ENCODE measurements at regions of chr5 and their contacts with region 1.

Region 1: DNA sequence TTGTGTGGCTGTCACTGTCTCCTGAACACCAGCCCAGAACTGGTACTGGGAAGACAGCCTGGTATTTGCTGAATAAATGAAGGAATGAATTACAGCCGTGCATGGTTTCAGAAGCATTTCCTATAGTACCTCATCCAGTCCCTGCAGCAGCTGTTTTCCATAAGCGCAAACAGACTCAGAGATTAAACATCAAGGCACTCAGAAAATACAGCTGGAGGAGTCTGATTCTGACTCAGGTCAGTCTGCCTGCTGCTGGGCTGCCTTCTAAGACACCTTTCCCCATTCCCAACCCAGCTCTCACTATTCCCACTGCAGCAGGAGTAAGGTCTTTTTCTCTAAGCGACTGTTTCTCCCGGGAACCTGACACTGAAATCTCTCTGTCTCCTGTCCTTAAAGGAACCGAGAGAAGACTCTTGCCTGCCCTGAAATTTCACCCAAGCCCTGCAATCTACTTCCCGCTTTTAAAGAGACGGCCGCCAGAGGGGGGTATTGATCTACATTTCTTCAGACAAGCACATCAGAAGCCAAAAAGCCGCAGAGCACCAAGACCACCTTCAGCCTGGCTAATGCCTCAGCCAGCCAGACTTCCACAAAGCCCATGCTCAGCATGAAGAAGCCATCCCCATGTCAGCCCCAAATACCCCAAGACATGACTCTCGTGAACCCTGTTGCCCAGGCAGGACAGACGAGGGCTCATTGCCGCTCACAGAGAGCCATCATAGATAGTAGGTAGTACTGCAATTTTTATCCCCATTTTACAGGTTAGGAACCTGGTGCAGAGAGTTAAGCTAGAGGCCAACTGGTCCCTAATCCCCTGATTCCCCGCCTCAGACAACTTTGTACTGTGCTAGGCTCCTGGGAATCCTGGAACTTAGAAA is 5.4 kb upstream of the FOXI1 start:
- DNase-seq: peak; percentile 87 to 94 (median 91)
- H3K4me3 ChIP-seq: no peak overlapping the region
- H3K27ac ChIP-seq: no peak overlapping the region
- H3K4me1 ChIP-seq: peaks cover 6 to 30% (median 17%) of the 10 kb centered on the region in 4 experiments
- H3K27me3 ChIP-seq: no peaks in the 10 kb centered on the region

Region 2: DNA sequence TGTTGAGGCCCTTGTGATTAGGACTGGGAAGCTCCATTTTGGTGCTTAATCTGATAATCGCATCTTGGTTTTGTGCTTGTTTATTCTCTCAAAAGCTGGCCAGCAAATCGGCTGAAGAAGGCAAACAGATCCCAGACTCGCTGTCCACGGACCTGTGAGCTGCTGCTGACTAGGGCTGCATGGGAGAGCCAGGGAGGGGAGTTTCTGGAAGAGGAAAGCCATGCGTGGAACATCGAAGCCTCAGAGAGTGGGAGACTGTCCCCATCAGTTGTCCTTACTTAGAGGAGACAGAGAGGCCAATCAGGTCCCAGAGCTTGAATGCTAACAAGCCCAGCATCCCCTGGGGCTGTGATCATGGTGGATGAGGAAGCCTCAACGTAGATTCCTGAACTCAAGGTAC is 17.6 kb before region 1 on chr5:
- CTCF ChIA-PET with region 1: interaction called, 12 read pairs
- POLR2A ChIA-PET with region 1: no interaction called
- DNase-seq: no peak
- H3K4me3 ChIP-seq: no peak overlapping the region
- H3K27ac ChIP-seq: no peak overlapping the region
- H3K4me1 ChIP-seq: no peaks in the 10 kb centered on the region
- H3K27me3 ChIP-seq: no peaks in the 10 kb centered on the region

Region 3: DNA sequence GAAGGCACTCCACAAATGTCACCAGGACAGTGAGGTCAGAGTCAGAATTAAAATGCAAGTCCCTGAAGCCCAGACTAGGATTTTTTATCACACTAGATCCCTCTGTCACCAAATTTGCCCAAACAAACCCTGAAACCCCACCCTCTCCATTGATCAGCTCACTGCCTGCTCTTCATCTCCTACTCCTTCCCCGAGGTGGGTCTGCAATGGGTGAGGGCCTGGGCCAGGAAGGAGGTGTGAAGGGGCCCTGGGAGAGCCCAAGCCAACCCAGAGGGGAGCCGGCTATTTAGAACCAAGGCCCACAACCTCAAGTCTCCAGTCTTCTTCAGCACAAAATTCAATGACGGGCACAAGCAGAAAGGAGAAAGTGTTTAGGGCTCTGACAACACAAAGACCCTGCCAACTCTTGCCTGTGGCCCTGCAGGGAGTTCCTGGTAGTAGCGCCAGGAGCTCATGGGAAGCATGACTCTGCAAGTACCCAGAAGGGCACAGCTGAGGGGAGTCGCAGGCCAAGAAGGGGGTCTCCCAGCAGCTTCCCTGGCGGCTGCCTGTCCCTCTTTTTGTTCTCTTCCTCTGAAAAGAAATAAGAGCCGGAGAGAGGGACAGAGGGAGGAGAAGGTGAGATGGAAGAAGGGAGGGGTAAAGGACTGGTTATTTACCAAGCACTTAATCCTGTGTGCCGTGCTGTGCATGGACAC is 10.9 kb after region 1 on chr5:
- CTCF ChIA-PET with region 1: interaction called, 24 read pairs
- POLR2A ChIA-PET with region 1: no interaction called
- DNase-seq: peak in 2 of 3 donors; percentile 49 to 55
- H3K4me3 ChIP-seq: no peak overlapping the region
- H3K27ac ChIP-seq: no peak overlapping the region
- H3K4me1 ChIP-seq: peaks cover 1 to 22% (median 12%) of the 10 kb centered on the region in 4 experiments
- H3K27me3 ChIP-seq: no peaks in the 10 kb centered on the region

Region 4: DNA sequence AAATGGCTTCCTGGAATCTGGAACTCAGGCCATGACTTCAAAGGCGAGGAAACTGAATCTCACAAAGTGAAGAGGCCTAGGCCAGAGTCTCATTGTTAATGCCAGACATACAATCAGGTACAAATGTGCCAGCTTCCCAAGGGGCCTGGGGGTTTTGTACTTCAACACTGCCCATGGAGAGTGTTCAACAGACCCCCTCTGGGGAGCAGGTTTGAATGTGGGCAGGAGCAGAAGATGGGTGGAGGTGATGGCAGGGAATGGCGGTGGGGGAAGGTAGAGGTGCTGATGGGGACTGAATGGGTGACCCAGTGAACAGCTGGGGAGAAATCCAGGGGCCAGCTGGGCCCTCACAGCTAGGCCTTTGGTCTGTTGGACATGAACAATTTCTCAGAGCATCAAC is 17.4 kb after region 1 on chr5:
- CTCF ChIA-PET with region 1: interaction called, 24 read pairs
- POLR2A ChIA-PET with region 1: no interaction called
- DNase-seq: no peak
- H3K4me3 ChIP-seq: no peak overlapping the region
- H3K27ac ChIP-seq: no peak overlapping the region
- H3K4me1 ChIP-seq: peaks cover 1 to 8% (median 4%) of the 10 kb centered on the region in 4 experiments
- H3K27me3 ChIP-seq: no peaks in the 10 kb centered on the region

Region 5: GRCh38 chr5:170183816-170184687 is 83.7 kb after region 1 on chr5:
- CTCF ChIA-PET with region 1: interaction called, 39 read pairs
- POLR2A ChIA-PET with region 1: interaction called, 3 read pairs
- DNase-seq: peak; percentile 27 to 55 (median 46)
- H3K4me3 ChIP-seq: no peak overlapping the region
- H3K27ac ChIP-seq: no peak overlapping the region
- H3K4me1 ChIP-seq: no peaks in the 10 kb centered on the region
- H3K27me3 ChIP-seq: no peaks in the 10 kb centered on the region

Region 6: DNA sequence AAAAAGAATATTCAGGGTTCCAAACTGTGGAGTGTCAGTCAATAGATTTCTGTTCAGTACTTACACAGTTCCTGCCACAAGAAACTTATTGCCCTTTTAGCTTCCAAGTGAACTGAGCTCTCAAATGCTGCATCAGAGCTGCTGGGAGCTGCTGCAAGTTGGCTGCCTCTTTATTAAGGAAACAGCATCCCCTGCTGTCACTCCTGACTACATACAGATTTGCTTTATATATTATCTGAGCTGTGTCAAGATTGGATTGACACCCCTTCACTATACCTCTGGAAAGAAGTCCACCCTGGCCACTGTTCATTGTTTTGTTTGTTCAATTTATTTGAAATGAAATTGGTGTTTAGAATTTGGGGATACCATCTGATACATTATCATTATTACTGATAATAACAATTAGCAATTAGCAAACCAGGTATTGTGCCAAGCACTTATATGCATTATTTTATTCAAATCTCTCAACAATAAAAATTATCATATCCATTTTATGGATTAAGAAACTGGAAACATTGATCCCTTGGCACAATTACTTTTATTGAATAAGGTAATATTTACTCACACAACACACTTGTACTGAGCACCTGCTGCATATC is 116.1 kb after region 1 on chr5:
- CTCF ChIA-PET with region 1: interaction called, 74 read pairs
- POLR2A ChIA-PET with region 1: no interaction called
- DNase-seq: peak; percentile 68 to 86 (median 83)
- H3K4me3 ChIP-seq: no peak overlapping the region
- H3K27ac ChIP-seq: no peak overlapping the region
- H3K4me1 ChIP-seq: peaks cover 0 to 9% (median 4%) of the 10 kb centered on the region in 4 experiments
- H3K27me3 ChIP-seq: no peaks in the 10 kb centered on the region

Region 7: GRCh38 chr5:170225326-170226128 is 125.2 kb after region 1 on chr5:
- CTCF ChIA-PET with region 1: interaction called, 14 read pairs
- POLR2A ChIA-PET with region 1: no interaction called
- DNase-seq: peak; percentile 60 to 78 (median 68)
- H3K4me3 ChIP-seq: no peak overlapping the region
- H3K27ac ChIP-seq: no peak overlapping the region
- H3K4me1 ChIP-seq: peaks cover 0 to 4% (median 2%) of the 10 kb centered on the region in 4 experiments
- H3K27me3 ChIP-seq: no peaks in the 10 kb centered on the region

Measured in common myeloid progenitor, CD34-positive (primary cell).